HCT116 (cell line): ENCODE measurements at regions of chr13 and their contacts with region 1.

Region 1: DNA sequence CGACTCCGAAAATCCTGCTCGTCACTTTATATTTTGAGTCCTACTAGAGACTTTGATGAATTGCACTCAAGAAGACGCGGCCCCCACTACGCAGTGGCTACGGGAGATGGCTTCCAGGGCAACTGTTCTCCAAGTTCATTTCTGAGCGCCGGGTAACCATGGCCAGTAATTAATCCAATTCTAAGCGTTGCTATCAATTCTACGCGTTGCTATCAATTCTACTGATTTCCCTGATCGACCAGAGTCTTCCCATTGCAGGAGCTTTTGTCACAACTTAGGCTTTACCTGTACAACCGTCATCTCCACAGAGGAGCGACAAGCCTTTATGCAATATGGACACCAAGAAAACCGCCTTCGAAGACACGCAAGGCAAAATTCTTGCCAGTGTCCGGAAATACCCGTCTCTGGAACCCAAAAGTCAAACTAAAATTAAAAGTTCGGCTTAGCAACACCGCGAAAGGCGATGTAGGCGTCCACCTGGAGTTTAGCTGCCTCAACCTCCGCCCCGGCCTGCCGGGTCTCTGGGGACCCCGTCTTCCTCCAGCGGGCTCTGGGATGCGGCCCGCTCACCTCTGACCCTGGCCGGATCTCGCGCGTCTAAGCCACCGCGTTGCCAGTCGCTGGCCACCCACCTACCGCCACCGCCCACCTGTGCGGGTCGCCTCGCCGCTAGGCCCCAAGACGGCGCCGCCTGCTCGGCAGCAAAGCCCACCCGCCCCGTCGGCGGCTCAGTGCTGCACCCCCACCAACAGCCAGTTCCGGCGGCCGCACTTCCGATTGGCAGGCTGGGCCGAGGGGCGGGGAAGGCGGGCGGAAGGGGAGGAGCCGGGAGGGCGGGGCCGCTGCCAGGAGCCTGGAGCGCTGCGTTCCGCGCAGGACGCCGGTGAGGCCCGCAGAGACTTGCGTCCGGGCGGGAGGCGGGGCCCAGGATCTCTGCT is at the start of gene SUPT20H:
- DNase-seq: peak; percentile 71
- ATAC-seq: peak; percentile 97
- H3K4me3 ChIP-seq: peak within 1 kb of the TSS; percentile 89 to 99
- H3K27ac ChIP-seq: peak within 1 kb of the TSS; percentile 66
- H3K4me1 ChIP-seq: peaks cover 6 to 14% of the 10 kb centered on the region in 2 experiments; a peak in 3 of 4 replicates
- H3K27me3 ChIP-seq: no peaks in the 10 kb centered on the region
- CTCF ChIP-seq: no peak
- POLR2A ChIP-seq: no peak
- RAD21 ChIP-seq: no peak
- total RNA-seq, gene SUPT20H: 42.9 TPM

Region 2: DNA sequence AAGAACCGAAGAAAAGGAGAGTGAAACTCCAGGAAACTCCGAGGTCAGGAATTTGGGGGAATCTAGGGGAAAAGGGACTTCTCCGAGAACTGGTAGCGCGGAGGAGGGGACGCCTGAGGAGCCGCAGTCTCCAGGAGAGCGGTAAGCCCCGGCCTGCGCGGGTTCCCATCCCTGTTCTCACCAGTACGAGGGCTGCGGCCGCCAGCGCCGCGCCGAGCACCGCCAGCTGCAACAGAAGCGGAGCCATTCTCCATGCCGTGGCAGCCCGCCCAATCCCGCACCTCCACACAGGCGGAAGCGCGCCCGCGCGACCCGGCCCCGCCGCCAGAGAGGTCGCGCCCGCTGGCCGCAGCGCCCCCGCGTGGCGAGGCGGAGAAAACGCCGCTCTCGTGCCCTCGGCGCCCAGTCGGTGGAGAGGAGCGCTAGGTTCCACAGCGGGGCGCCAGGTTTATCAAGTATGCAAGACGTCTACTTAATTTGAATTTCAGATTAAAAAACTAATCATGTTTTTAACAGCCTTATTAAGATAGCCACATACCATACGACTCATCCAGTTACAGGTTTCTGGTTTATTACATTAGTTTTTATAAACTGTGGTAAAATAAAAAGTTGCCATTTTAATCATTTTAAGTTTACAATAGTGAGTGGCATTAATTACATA is 60.0 kb before region 1 on chr13 and contains the start of gene ALG5:
- CTCF ChIA-PET with region 1: no interaction called
- POLR2A ChIA-PET with region 1: no interaction called
- RAD21 ChIA-PET with region 1: no interaction called
- intact Hi-C with region 1: loop called (anchors 5 kb)
- DNase-seq: peak; percentile 72
- ATAC-seq: peak; percentile 81
- H3K4me3 ChIP-seq: peak within 1 kb of the TSS; percentile 97
- H3K27ac ChIP-seq: peak within 1 kb of the TSS; percentile 99
- H3K4me1 ChIP-seq: peaks cover 10 to 17% of the 10 kb centered on the region in 2 experiments; a peak in 3 of 4 replicates
- H3K27me3 ChIP-seq: no peaks in the 10 kb centered on the region
- CTCF ChIP-seq: peak; percentile 53 to 90 (median 71); a peak in 5 of 6 replicates
- POLR2A ChIP-seq: peak; percentile 89
- RAD21 ChIP-seq: no peak
- total RNA-seq, gene ALG5: 32.2 TPM